ENCODE measurements at regions of chr7 and their contacts with region 1.

Region 1: GRCh38 chr7:26318921-26319320 is 27.3 kb downstream of the SNX10 start:
- DNase-seq: no peak
- CTCF ChIP-seq: no peak

Region 2: DNA sequence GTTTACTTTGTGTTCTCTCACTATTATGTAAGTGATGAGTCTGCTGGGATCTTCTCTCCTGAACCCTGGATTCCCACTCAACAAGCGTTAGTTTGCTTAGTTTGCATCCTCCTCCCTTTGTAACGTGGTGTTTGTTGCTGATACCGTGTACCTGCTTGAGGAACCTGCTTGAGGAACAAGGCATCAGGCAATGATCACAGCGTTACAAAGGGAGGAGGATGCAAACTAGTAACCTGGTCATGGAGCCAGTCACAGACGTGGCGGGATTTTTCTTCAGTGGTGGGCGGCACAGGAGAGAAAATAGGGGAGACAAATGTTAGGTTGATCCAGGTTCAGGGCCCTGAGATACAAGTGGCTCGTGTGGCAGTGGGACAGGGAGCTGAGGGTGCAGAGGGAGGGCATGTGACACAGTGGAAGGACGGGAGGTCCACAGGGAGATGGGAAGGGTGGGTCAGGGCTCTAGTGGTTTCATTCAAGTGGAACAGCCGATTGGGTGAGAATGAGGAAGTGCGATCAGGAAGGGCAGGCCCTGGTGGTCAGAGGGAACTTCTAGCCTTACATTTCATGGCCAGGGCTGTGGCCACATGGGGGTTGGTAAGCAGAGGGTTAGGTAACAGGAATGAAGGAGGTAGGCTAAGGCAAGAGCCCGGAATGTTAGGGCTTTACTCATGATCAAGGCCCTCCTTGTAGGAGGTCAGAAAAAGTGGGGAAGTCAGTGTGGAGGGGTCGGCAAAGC is 10.8 kb after region 1 on chr7:
- CTCF ChIA-PET with region 1: interaction called, 11 read pairs
- POLR2A ChIA-PET with region 1: no interaction called
- DNase-seq: peak; percentile 35
- CTCF ChIP-seq: no peak

Region 3: DNA sequence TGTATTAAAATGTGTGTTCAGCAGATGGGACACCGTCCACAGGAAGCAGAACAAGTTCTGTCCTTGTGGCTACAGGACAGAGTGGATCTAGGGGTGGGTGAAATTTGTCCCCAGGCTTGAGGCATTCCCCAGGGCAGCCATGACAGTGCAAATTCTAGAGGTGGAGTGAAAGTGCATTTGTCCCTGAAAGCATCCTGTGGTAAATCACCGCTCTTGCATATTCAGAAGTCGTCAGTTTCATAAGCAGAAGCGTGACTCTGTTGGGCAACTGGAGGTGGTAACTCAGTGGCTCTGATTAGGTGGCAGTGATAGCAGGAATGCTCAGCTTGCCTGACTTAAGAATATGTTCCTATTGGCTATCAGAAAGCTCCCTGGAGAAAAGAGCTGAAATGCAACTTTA is 69.3 kb after region 1 on chr7:
- CTCF ChIA-PET with region 1: no interaction called
- POLR2A ChIA-PET with region 1: no interaction called
- DNase-seq: peak; percentile 32
- CTCF ChIP-seq: no peak